Activated CD8-positive, alpha-beta T cell treated with anti-CD3 and anti-CD28 coated beads, Interleukin-2, amount 10 ng/mL, durations not matched to agents 7 days and 5 days (primary cell): ENCODE measurements at regions of chr22 and their contacts with region 1.

Region 1: GRCh38 chr22:22802339-22802970 is 85.2 kb upstream of the IGLL5 start:
- DNase-seq: peak; percentile 71
- ATAC-seq: peak; percentile 73
- H3K4me3 Mint-ChIP-seq: no peak overlapping the region
- H3K27ac Mint-ChIP-seq: no peak overlapping the region
- H3K4me1 Mint-ChIP-seq: peaks cover 2% of the 10 kb centered on the region
- H3K27me3 Mint-ChIP-seq: peaks cover 22% of the 10 kb centered on the region

Region 2: DNA sequence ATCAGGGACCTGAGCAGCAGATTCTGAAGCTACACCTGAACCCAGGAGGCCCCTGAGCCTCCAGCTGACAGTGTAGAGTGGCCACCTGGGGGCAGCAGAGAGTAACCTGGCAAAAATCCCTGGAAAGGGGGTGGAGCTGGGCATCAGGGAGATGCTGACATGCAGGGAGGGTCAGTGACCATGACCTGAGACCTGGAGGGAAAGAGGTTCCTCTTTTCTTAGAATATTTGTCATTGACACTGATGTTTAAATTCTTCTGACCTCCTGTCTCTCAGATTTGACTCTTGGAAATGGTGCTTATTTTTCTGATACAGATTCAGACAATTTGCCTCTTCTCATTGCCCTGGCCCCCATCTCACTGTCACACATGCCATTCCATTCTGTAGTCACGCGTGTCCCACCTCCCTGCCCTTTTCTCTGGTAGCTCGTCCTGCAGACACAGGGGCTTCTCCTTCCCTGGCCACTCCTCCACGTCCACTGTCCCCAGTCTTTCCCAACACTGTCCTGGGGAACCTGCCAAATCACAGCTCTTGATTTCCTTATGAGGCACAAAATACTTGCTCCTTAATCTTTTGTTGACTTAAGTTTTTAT is 32.1 kb before region 1 on chr22:
- CTCF ChIA-PET with region 1: interaction called, 10 read pairs
- POLR2A ChIA-PET with region 1: no interaction called
- DNase-seq: peak; percentile 59
- ATAC-seq: peak; percentile 69
- H3K4me3 Mint-ChIP-seq: no peak overlapping the region
- H3K27ac Mint-ChIP-seq: no peak overlapping the region
- H3K4me1 Mint-ChIP-seq: no peaks in the 10 kb centered on the region
- H3K27me3 Mint-ChIP-seq: peaks cover 18% of the 10 kb centered on the region

Region 3: DNA sequence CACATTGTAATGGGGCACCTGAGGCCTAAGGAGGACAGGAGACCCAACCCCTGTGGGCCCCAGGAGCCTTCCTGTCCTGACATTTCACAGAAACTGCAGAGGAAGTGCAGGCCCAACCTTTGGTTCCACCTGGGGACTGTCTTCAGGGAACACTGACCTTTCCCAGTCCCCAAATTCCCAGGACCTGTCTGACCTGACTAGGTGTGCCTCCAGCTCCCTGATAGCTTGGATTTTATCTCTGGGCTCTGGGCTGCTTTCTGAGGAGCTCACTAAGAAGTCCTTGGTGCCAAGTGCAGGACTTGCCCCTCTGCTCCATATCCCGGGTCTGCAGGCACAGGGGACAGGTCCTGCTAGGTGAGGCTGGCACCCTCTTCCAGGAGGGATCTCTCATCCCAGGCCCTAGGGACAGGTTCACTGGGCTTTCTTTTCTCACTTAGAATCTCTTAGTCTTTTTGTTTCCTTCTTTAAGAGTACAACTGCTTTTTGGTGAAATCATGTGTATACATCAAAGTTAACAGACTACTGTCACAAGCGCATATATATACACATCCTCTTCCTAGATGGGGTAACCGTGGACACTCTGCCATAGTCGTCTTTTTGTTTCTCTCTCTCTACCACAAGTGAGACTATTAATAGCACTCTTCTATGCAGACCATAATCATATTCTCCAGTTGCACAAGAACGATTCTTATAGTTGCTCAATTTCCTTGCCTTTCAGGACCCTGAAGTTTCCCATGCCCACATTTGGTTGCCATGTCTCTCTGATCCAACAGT is 13.1 kb after region 1 on chr22:
- CTCF ChIA-PET with region 1: interaction called, 20 read pairs
- POLR2A ChIA-PET with region 1: no interaction called
- DNase-seq: no peak
- ATAC-seq: no peak
- H3K4me3 Mint-ChIP-seq: no peak overlapping the region
- H3K27ac Mint-ChIP-seq: peak overlapping the region; percentile 60
- H3K4me1 Mint-ChIP-seq: peaks cover 60% of the 10 kb centered on the region
- H3K27me3 Mint-ChIP-seq: no peaks in the 10 kb centered on the region

Region 4: DNA sequence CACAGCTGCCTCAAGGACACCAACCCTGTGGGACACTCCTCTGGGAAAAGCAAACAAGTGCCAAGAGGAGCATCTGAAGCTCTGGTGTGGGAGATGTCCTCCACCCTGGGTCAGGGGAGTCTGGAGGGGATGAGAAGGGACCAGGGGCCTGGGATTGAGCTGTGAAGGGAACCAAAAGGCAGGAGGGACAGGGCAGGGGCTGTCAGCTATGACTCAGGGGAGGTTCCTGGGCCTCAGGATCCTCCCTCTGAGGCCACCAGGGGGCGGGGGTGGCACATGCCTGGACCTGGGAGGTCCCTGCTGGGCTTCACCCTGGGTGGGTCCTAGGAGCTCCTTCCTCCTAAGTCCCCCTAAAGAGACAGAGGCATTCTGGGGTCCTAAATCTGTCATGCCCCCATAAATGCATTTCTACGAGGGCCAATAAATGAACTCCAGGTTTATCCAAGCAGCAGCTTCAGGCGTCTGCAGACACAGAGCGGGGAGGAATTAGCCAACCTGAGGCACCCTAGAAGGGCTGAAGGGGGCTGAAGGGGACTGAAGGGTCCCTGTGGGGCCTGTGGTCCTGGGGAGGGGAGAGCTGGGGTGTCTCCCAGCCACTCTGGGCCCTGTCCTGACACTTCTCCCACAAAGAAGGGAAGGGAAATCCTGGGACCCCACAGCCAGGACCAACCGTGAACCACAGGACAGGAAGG is 53.3 kb after region 1 on chr22:
- CTCF ChIA-PET with region 1: interaction called, 24 read pairs
- POLR2A ChIA-PET with region 1: no interaction called
- DNase-seq: peak; percentile 56
- ATAC-seq: peak; percentile 83
- H3K4me3 Mint-ChIP-seq: no peak overlapping the region
- H3K27ac Mint-ChIP-seq: no peak overlapping the region
- H3K4me1 Mint-ChIP-seq: no peaks in the 10 kb centered on the region
- H3K27me3 Mint-ChIP-seq: peaks cover 40% of the 10 kb centered on the region

Region 5: DNA sequence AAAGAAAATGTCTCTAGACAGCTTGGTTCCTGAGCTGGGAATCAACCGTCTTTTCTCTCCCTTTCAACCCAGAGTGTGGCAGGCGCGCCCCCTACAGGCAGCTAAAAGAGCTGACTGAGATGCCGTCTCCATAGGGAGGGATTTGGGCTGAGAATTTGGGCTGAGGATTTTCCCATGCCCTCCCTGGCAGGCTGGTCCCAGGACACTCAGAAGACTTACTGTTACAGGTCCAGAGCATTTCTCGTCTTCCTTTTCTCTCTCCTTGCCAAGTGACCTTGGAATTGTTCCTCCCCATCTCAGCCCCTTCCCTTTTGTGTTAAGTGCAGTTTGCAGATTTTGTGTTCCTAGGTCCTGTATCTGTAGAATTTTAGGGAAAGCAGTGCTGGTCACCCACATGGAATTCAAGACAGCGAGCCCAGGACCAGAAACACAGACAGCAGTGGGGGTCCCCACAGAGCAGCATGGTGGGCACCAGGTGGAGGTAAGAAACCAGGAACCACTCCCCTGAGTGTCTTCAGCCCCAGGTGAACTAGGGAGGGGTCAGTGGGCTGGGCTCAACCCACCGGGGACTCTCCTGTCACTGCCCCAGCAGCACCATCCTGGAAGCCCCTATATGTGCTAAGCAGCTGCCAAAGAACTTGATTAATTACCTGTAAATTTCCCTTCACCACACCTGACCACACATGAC is 75.2 kb after region 1 on chr22:
- CTCF ChIA-PET with region 1: interaction called, 256 read pairs
- POLR2A ChIA-PET with region 1: no interaction called
- DNase-seq: peak; percentile 82
- ATAC-seq: peak; percentile 60
- H3K4me3 Mint-ChIP-seq: no peak overlapping the region
- H3K27ac Mint-ChIP-seq: no peak overlapping the region
- H3K4me1 Mint-ChIP-seq: no peaks in the 10 kb centered on the region
- H3K27me3 Mint-ChIP-seq: peaks cover 21% of the 10 kb centered on the region

Region 6: GRCh38 chr22:22903355-22903777 is 100.9 kb after region 1 on chr22:
- CTCF ChIA-PET with region 1: no interaction called
- POLR2A ChIA-PET with region 1: no interaction called
- DNase-seq: no peak
- ATAC-seq: no peak
- H3K4me3 Mint-ChIP-seq: no peak overlapping the region
- H3K27ac Mint-ChIP-seq: no peak overlapping the region
- H3K4me1 Mint-ChIP-seq: no peaks in the 10 kb centered on the region
- H3K27me3 Mint-ChIP-seq: peaks cover 8% of the 10 kb centered on the region